Caco-2 (cell line): ENCODE measurements at regions of chr1 and their contacts with region 1.

Region 1: GRCh38 chr1:117674521-117675397 is 68.9 kb downstream of the TENT5C start:
- DNase-seq: peak; percentile 65 to 69
- H3K4me3 ChIP-seq: no peak overlapping the region
- H3K4me3 Mint-ChIP-seq: no peak overlapping the region
- H3K27ac Mint-ChIP-seq: peak overlapping the region; percentile 83
- H3K4me1 ChIP-seq: peaks cover 40% of the 10 kb centered on the region
- H3K4me1 Mint-ChIP-seq: peaks cover 18% of the 10 kb centered on the region
- H3K27me3 ChIP-seq: no peaks in the 10 kb centered on the region
- H3K27me3 Mint-ChIP-seq: no peaks in the 10 kb centered on the region
- CTCF ChIP-seq: peak in 1 of 2 experiments; percentile 16

Region 2: DNA sequence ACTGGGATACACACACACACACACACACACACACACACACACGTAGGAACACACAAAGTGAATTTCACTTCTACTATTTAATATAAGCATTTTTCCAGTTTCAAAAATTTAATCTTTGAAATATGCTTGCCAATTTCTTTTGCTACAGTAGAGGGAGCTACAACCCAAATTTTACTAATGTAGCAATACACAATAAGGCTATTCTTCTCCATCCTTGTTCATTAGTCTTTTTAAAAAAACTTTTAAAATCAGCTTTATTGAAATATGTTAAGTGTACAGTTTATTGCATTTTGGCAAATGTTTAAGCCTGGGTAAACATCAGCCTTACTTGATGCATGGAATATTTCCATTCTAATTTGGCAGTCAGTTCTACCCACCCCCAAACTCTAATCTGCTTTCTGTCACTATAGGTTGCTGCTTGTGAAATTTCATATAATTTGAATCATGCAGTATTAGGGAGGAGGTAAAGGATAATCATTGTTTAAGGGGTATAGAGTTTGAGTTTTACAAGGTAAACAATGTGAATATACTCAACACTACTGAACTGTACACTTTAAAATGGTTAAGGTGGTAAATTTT is 161.9 kb before region 1 on chr1:
- CTCF ChIA-PET with region 1: no interaction called
- POLR2A ChIA-PET with region 1: no interaction called
- intact Hi-C with region 1: loop called (anchors 1 kb)
- DNase-seq: peak in 1 of 2 experiments; percentile 19
- H3K4me3 ChIP-seq: no peak overlapping the region
- H3K4me3 Mint-ChIP-seq: no peak overlapping the region
- H3K27ac Mint-ChIP-seq: no peak overlapping the region
- H3K4me1 ChIP-seq: no peaks in the 10 kb centered on the region
- H3K4me1 Mint-ChIP-seq: no peaks in the 10 kb centered on the region
- H3K27me3 ChIP-seq: no peaks in the 10 kb centered on the region
- H3K27me3 Mint-ChIP-seq: no peaks in the 10 kb centered on the region
- CTCF ChIP-seq: peak; percentile 22 to 44

Region 3: GRCh38 chr1:117534995-117535467 is 139.7 kb before region 1 on chr1:
- CTCF ChIA-PET with region 1: interaction called, 4 read pairs
- POLR2A ChIA-PET with region 1: no interaction called
- intact Hi-C with region 1: loop called (anchors 5 kb)
- DNase-seq: peak; percentile 52 to 60
- H3K4me3 ChIP-seq: no peak overlapping the region
- H3K4me3 Mint-ChIP-seq: no peak overlapping the region
- H3K27ac Mint-ChIP-seq: no peak overlapping the region
- H3K4me1 ChIP-seq: no peaks in the 10 kb centered on the region
- H3K4me1 Mint-ChIP-seq: no peaks in the 10 kb centered on the region
- H3K27me3 ChIP-seq: no peaks in the 10 kb centered on the region
- H3K27me3 Mint-ChIP-seq: no peaks in the 10 kb centered on the region
- CTCF ChIP-seq: peak; percentile 28 to 40

Region 4: DNA sequence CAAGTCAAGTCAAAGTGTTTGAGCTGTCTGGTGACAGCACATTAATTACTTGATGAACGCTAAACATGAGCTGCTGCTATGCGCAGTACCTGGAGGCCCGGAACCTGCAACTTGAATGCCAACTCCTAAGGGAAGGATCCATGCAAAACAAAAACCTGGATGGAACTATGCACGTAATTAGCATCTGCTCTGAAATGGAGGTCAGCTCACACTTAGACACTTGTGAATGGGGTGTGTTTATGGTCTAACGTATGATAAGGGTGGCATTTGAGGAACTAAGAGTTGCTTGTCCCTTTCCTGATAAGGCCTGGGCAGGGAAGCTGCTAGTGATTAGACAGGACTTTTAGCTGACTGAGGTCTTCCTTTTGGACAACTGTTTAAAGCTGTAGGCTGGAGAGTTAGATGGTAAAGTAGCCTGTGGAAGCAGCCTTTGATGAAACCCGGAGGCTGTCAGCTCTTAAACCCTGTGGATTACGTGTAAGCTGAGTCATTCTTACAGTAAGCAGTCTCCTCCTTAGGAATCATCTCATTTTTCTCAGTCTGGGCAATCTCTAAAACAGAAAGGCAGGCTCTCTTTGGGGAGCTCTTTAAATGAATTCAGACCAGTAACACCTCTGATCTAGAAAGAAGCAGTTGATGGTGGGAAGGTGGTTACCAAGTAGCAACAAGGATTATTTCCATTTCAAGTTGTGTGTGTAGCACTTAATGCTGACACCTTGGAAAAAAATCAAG is 62.1 kb before region 1 on chr1:
- CTCF ChIA-PET with region 1: no interaction called
- POLR2A ChIA-PET with region 1: no interaction called
- intact Hi-C with region 1: loop called (anchors 2 kb)
- DNase-seq: peak; percentile 38 to 45
- H3K4me3 ChIP-seq: no peak overlapping the region
- H3K4me3 Mint-ChIP-seq: peak overlapping the region; percentile 40
- H3K27ac Mint-ChIP-seq: peak overlapping the region; percentile 64
- H3K4me1 ChIP-seq: peaks cover 28% of the 10 kb centered on the region
- H3K4me1 Mint-ChIP-seq: peaks cover 50% of the 10 kb centered on the region
- H3K27me3 ChIP-seq: no peaks in the 10 kb centered on the region
- H3K27me3 Mint-ChIP-seq: no peaks in the 10 kb centered on the region
- CTCF ChIP-seq: no peak

Region 5: GRCh38 chr1:117638759-117639158 is 36.0 kb before region 1 on chr1:
- CTCF ChIA-PET with region 1: no interaction called
- POLR2A ChIA-PET with region 1: interaction called, 4 read pairs
- intact Hi-C with region 1: loop called (anchors 1 kb)
- DNase-seq: peak in 1 of 2 experiments; percentile 59
- H3K4me3 ChIP-seq: no peak overlapping the region
- H3K4me3 Mint-ChIP-seq: no peak overlapping the region
- H3K27ac Mint-ChIP-seq: no peak overlapping the region
- H3K4me1 ChIP-seq: no peaks in the 10 kb centered on the region; the same call in 1 of the 2 replicates
- H3K4me1 Mint-ChIP-seq: peaks cover 9% of the 10 kb centered on the region
- H3K27me3 ChIP-seq: no peaks in the 10 kb centered on the region
- H3K27me3 Mint-ChIP-seq: no peaks in the 10 kb centered on the region
- CTCF ChIP-seq: no peak

Region 6: GRCh38 chr1:117685936-117686806 is 11.4 kb after region 1 on chr1:
- CTCF ChIA-PET with region 1: no interaction called
- POLR2A ChIA-PET with region 1: no interaction called
- intact Hi-C with region 1: no loop called
- DNase-seq: no peak
- H3K4me3 ChIP-seq: no peak overlapping the region
- H3K4me3 Mint-ChIP-seq: no peak overlapping the region
- H3K27ac Mint-ChIP-seq: no peak overlapping the region
- H3K4me1 ChIP-seq: no peaks in the 10 kb centered on the region
- H3K4me1 Mint-ChIP-seq: peaks cover 12% of the 10 kb centered on the region
- H3K27me3 ChIP-seq: no peaks in the 10 kb centered on the region
- H3K27me3 Mint-ChIP-seq: no peaks in the 10 kb centered on the region
- CTCF ChIP-seq: no peak